Endothelial cell of umbilical vein (primary cell): ENCODE measurements at regions of chr20 and their contacts with region 1.

Region 1: DNA sequence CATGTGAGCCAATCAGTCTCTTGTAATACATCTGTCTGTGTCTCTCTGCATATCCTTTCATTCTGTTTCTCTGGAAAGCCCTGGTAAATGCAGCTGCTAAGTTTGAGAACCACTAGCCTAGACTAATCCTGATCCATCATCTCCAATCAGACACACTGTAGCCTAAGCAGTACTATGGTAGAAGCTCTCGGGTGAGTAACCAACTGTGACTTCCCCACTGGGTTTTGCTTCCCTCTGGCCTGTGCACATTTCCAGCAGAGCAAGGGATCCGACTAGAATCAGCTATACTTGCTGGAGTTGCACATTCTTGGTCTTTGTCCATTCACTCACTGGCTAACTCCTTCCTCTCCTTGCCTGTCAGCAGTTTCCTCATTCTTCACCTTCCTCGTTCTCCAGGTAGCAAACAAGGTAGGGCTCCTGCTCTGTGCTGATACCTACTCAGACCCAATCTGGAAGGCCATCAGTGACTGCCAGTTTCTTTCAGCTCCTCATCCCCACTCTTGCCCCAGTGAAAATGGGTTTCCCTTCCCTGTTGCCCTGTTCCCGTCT is 184.2 kb downstream of the PLCB4 start:
- DNase-seq: no peak
- H3K4me3 ChIP-seq: no peak overlapping the region
- H3K27ac ChIP-seq: no peak overlapping the region
- H3K4me1 ChIP-seq: no peaks in the 10 kb centered on the region
- H3K27me3 ChIP-seq: no peaks in the 10 kb centered on the region
- CTCF ChIP-seq: no peak
- POLR2A ChIP-seq: no peak

Region 2: GRCh38 chr20:9241721-9242427 is 11.2 kb before region 1 on chr20:
- CTCF ChIA-PET with region 1: interaction called, 11 read pairs
- POLR2A ChIA-PET with region 1: no interaction called
- dilution Hi-C with region 1: no loop called
- intact Hi-C with region 1: no loop called
- DNase-seq: no peak
- H3K4me3 ChIP-seq: no peak overlapping the region
- H3K27ac ChIP-seq: no peak overlapping the region
- H3K4me1 ChIP-seq: peaks cover 14% of the 10 kb centered on the region
- H3K27me3 ChIP-seq: no peaks in the 10 kb centered on the region
- CTCF ChIP-seq: no peak
- POLR2A ChIP-seq: no peak